ENCODE measurements at regions of chr2 and their contacts with region 1.

Region 1: DNA sequence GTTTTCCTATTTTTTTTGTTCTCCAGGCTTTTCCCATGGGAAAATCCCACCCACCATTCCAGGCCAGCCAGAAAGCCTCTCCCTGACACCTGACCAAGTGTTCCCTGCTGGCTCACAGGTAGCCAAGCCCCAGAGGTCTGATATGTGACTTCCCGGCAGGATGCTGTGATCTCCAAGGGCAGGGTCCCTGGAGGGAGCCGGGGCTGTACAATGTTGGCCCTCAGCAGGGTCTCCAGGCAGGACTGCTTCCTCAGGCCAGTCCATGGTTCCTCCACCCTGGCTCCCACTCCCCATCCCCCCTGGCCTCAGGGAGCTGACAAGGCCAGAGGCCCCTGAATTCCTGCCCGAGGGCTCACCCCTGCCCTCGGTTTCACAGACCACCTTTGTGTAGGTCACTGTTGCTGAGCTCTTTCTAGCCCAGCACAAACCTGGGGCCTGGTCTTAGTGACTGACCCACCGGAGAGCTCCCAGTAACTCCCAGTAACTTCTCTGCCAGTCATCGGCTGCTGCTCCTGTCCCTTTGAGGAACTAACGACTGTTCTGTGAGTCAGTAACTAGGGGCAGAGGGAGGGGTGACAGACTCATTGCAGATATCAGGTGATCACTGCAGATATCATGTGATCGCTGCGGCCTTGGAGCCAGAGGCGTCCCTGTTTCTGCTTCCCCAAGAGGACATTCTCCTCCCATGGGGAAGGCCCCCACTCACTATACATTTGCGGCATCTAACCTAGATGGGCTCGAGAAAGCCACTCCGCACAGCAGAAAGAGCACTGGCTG is 38.7 kb downstream of the SDC1 start:
- DNase-seq: peak; percentile 48 to 82 (median 49)
- ATAC-seq: peak; percentile 5 to 51 (median 42)
- H3K4me3 ChIP-seq: peak overlapping the region in 1 of 3 donors; percentile 17
- H3K27ac ChIP-seq: peak overlapping the region; percentile 49 to 87 (median 58)
- H3K4me1 ChIP-seq: peaks cover 0 to 75% (median 36%) of the 10 kb centered on the region in 4 donors
- H3K27me3 ChIP-seq: no peaks in the 10 kb centered on the region
- CTCF ChIP-seq: no peak
- POLR2A ChIP-seq: peak; percentile 77

Region 2: GRCh38 chr2:20135631-20136050 is 50.6 kb before region 1 on chr2:
- intact Hi-C with region 1: loop called in 1 of 2 experiments (anchors 10 kb)
- DNase-seq: peak; percentile 81 to 83 (median 82)
- ATAC-seq: peak; percentile 91 to 96 (median 92)
- H3K4me3 ChIP-seq: no peak overlapping the region
- H3K27ac ChIP-seq: no peak overlapping the region
- H3K4me1 ChIP-seq: peaks cover 0 to 13% (median 5%) of the 10 kb centered on the region in 4 donors
- H3K27me3 ChIP-seq: no peaks in the 10 kb centered on the region
- CTCF ChIP-seq: peak; percentile 72 to 91 (median 87)
- POLR2A ChIP-seq: no peak

Region 3: GRCh38 chr2:20145497-20146193 is 40.6 kb before region 1 on chr2:
- intact Hi-C with region 1: loop called in 1 of 2 experiments (anchors 5 kb)
- DNase-seq: no peak
- ATAC-seq: no peak
- H3K4me3 ChIP-seq: no peak overlapping the region
- H3K27ac ChIP-seq: no peak overlapping the region
- H3K4me1 ChIP-seq: peaks cover 0 to 8% (median 4%) of the 10 kb centered on the region in 4 donors
- H3K27me3 ChIP-seq: no peaks in the 10 kb centered on the region
- CTCF ChIP-seq: no peak
- POLR2A ChIP-seq: no peak

Measured in right lobe of liver (tissue), 6 donors.